ENCODE measurements at regions of chr3 and their contacts with region 1.

Region 1: GRCh38 chr3:177777699-177778098 is 580.4 kb upstream of the TBL1XR1 start:
- DNase-seq: peak; percentile 67
- ATAC-seq: peak; percentile 67
- H3K4me3 ChIP-seq: no peak overlapping the region
- H3K27ac ChIP-seq: no peak overlapping the region
- H3K4me1 ChIP-seq: peaks cover 20% of the 10 kb centered on the region
- H3K27me3 ChIP-seq: no peaks in the 10 kb centered on the region
- CTCF ChIP-seq: peak; percentile 73

Region 2: GRCh38 chr3:177525987-177526712 is 251.5 kb before region 1 on chr3:
- CTCF ChIA-PET with region 1: no interaction called
- POLR2A ChIA-PET with region 1: no interaction called
- intact Hi-C with region 1: loop called (anchors 5 kb)
- DNase-seq: peak; percentile 37
- ATAC-seq: peak; percentile 66
- H3K4me3 ChIP-seq: no peak overlapping the region
- H3K27ac ChIP-seq: peak overlapping the region; percentile 35
- H3K4me1 ChIP-seq: peaks cover 33% of the 10 kb centered on the region
- H3K27me3 ChIP-seq: no peaks in the 10 kb centered on the region
- CTCF ChIP-seq: no peak

Measured in PC-3 (cell line).